CD14-positive monocyte (primary cell): ENCODE measurements at regions of chr5 and their contacts with region 1.

Region 1: DNA sequence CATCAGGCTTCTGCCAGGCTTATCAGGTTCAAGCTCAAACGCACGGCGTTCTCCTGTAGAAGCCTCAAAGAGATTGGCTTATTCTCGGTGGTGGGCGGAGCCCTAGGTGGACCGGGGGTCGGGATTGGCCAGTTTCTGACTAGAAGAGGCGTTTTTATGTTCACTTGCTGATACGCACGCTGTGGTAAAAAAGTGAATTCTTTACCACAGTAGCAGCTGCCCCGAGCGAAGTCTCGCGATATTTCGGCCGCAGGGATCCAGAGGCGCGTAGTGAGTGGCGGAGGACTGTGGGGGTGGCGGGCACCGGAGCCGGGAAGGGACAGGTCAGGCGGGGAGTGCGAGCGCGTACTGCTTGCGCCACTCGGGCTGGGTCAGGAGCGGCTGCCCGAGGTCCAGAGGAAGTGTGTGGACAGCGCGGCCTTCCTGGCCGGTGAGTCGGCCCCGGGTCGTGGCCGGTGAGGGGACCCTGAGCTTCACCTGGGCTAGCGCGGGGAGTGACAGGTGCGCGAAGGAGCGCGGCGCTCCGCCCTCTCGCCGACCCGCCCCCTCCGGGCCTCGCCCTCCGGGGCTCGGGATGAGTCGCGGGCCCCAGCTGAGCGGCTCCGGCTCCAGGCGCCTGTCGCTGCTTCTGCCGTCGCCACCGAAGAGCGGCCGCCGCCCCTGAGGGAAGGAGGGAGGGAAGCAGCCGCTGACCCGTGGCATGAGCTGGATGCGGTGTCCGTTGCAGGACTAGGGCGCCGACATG is at the start of gene DMXL1:
- DNase-seq: peak; percentile 99 to 100 (median 99)
- H3K4me3 ChIP-seq: peak within 1 kb of the TSS; percentile 79 to 90 (median 80)
- H3K4me3 Mint-ChIP-seq: peak within 1 kb of the TSS; percentile 85 to 98
- H3K27ac ChIP-seq: peak within 1 kb of the TSS; percentile 92 to 94
- H3K27ac Mint-ChIP-seq: peak within 1 kb of the TSS; percentile 93 to 99 (median 99)
- H3K4me1 ChIP-seq: peaks cover 38 to 41% of the 10 kb centered on the region in 2 donors
- H3K4me1 Mint-ChIP-seq: peaks cover 42% of the 10 kb centered on the region
- H3K27me3 ChIP-seq: no peaks in the 10 kb centered on the region
- H3K27me3 Mint-ChIP-seq: no peaks in the 10 kb centered on the region
- CTCF ChIP-seq: no peak
- polyA plus RNA-seq, gene DMXL1: 15.5 to 20.5 (median 19.5) TPM

Region 2: GRCh38 chr5:118987988-118988865 is 82.8 kb before region 1 on chr5 and contains the start of gene DTWD2:
- intact Hi-C with region 1: loop called in 1 of 2 experiments (anchors 5 kb)
- DNase-seq: peak; percentile 85 to 87 (median 87)
- H3K4me3 ChIP-seq: peak within 1 kb of the TSS; percentile 56 to 87 (median 80)
- H3K4me3 Mint-ChIP-seq: peak within 1 kb of the TSS; percentile 74 to 89
- H3K27ac ChIP-seq: peak within 1 kb of the TSS; percentile 41 to 89
- H3K27ac Mint-ChIP-seq: peak within 1 kb of the TSS in 6 of 7 donors; percentile 59 to 91 (median 73)
- H3K4me1 ChIP-seq: peaks cover 11 to 17% of the 10 kb centered on the region in 2 donors
- H3K4me1 Mint-ChIP-seq: peaks cover 14% of the 10 kb centered on the region
- H3K27me3 ChIP-seq: no peaks in the 10 kb centered on the region
- H3K27me3 Mint-ChIP-seq: no peaks in the 10 kb centered on the region
- CTCF ChIP-seq: peak; percentile 99
- polyA plus RNA-seq, gene DTWD2: 1.2 to 2.7 (median 2.5) TPM

Region 3: GRCh38 chr5:119016125-119016774 is 54.8 kb before region 1 on chr5:
- intact Hi-C with region 1: loop called in 1 of 2 experiments (anchors 10 kb)
- DNase-seq: peak; percentile 63 to 83 (median 74)
- H3K4me3 ChIP-seq: no peak overlapping the region
- H3K4me3 Mint-ChIP-seq: peak overlapping the region in 1 of 2 donors; percentile 21
- H3K27ac ChIP-seq: peak overlapping the region; percentile 39 to 49
- H3K27ac Mint-ChIP-seq: peak overlapping the region in 6 of 7 donors; percentile 40 to 86 (median 72)
- H3K4me1 ChIP-seq: peaks cover 38 to 56% of the 10 kb centered on the region in 2 donors
- H3K4me1 Mint-ChIP-seq: peaks cover 33% of the 10 kb centered on the region
- H3K27me3 ChIP-seq: no peaks in the 10 kb centered on the region
- H3K27me3 Mint-ChIP-seq: no peaks in the 10 kb centered on the region
- CTCF ChIP-seq: no peak

Region 4: DNA sequence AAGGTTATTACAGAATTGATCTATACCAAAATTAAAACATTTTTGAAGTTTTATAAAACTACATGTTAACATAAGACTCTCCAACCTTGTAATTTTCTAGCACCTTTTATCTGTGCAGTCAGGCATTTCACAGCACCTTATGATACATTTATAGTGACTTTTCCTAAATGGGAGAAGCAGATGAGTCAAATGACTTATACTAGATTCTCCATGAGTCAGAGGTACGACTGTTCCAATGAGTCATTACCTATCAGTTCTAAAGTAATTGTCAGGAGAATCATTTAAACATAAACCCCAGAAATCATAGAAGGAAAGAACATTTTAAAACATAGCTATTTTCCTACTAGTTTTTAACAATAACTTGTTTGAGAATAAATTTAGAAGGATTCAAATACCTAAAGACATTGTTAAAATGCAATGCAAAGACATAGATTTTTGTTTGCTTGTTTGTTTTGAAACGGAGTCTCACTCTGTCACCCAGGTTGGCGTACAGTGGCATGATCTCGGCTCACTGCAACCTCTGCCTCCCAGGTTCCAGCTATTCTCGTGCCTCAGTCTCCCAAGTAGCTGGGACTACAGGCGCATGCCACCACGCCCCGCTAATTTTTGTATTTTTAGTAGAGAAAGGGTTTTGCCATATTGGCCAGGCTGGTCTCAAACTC is 34.8 kb before region 1 on chr5:
- intact Hi-C with region 1: loop called in 1 of 2 experiments (anchors 5 kb)
- DNase-seq: peak in 2 of 3 donors; percentile 22 to 61
- H3K4me3 ChIP-seq: no peak overlapping the region
- H3K4me3 Mint-ChIP-seq: no peak overlapping the region
- H3K27ac ChIP-seq: no peak overlapping the region
- H3K27ac Mint-ChIP-seq: no peak overlapping the region
- H3K4me1 ChIP-seq: peaks cover 20 to 21% of the 10 kb centered on the region in 2 donors
- H3K4me1 Mint-ChIP-seq: peaks cover 22% of the 10 kb centered on the region
- H3K27me3 ChIP-seq: no peaks in the 10 kb centered on the region
- H3K27me3 Mint-ChIP-seq: peaks cover 0 to 3% (median 0%) of the 10 kb centered on the region in 3 donors
- CTCF ChIP-seq: no peak

Region 5: GRCh38 chr5:119267958-119268386 is 197.0 kb after region 1 on chr5:
- intact Hi-C with region 1: loop called in 1 of 2 experiments (anchors 10 kb)
- DNase-seq: peak; percentile 92 to 95 (median 94)
- H3K4me3 ChIP-seq: peak overlapping the region; percentile 98 to 99 (median 99)
- H3K4me3 Mint-ChIP-seq: peak overlapping the region; percentile 98 to 100
- H3K27ac ChIP-seq: peak overlapping the region; percentile 72 to 96
- H3K27ac Mint-ChIP-seq: peak overlapping the region; percentile 84 to 96 (median 92)
- H3K4me1 ChIP-seq: peaks cover 42 to 46% of the 10 kb centered on the region in 2 donors
- H3K4me1 Mint-ChIP-seq: peaks cover 47% of the 10 kb centered on the region
- H3K27me3 ChIP-seq: no peaks in the 10 kb centered on the region
- H3K27me3 Mint-ChIP-seq: peaks cover 0 to 2% (median 0%) of the 10 kb centered on the region in 3 donors
- CTCF ChIP-seq: peak; percentile 94